Activated CD4-positive, alpha-beta T cell treated with anti-CD3 and anti-CD28 coated beads for 36 hours (primary cell): ENCODE measurements at regions of chr15 and their contacts with region 1.

Region 1: GRCh38 chr15:88975891-88976290 is 62.7 kb upstream of the MFGE8 start:
- DNase-seq: no peak
- ATAC-seq: no peak
- H3K4me3 Mint-ChIP-seq: no peak overlapping the region
- H3K27ac Mint-ChIP-seq: no peak overlapping the region
- H3K4me1 Mint-ChIP-seq: no peaks in the 10 kb centered on the region
- H3K27me3 Mint-ChIP-seq: no peaks in the 10 kb centered on the region

Region 2: GRCh38 chr15:88949734-88950400 is 26.0 kb before region 1 on chr15:
- CTCF ChIA-PET with region 1: no interaction called
- POLR2A ChIA-PET with region 1: no interaction called
- intact Hi-C with region 1: loop called in 1 of 2 experiments (anchors 2 kb)
- DNase-seq: no peak
- ATAC-seq: no peak
- H3K4me3 Mint-ChIP-seq: no peak overlapping the region
- H3K27ac Mint-ChIP-seq: no peak overlapping the region
- H3K4me1 Mint-ChIP-seq: no peaks in the 10 kb centered on the region
- H3K27me3 Mint-ChIP-seq: no peaks in the 10 kb centered on the region

Region 3: DNA sequence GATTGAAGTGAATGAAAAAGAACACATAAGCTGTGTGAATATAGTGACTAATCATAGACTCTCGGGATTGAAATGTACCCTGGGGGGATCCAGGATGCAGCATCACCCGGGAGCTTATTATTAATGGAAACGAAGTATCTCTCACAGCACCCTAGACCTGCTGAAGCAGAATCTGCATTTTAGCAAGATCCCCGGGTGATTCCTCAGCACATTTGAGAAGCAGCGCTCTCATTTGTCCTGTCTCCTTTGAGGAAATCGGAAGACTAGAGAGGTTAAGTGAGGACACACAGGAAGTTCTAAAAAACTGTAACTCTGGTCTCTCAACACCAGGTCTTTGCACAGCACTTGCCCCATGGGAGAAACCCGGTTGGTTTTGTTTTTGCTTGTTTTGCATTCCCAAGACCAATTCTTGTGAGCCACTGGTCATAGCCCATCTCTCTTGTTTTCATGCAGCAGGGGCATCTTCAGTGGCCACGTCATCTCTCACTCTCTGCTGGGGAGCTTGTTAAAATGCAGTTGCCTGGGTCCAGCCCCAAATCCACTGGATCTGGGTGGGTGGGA is 1055.4 kb after region 1 on chr15:
- CTCF ChIA-PET with region 1: no interaction called
- POLR2A ChIA-PET with region 1: no interaction called
- intact Hi-C with region 1: no loop called
- DNase-seq: peak; percentile 54
- ATAC-seq: peak; percentile 59
- H3K4me3 Mint-ChIP-seq: no peak overlapping the region
- H3K27ac Mint-ChIP-seq: peak overlapping the region; percentile 80
- H3K4me1 Mint-ChIP-seq: peaks cover 59% of the 10 kb centered on the region
- H3K27me3 Mint-ChIP-seq: no peaks in the 10 kb centered on the region